HEK293 (cell line): ENCODE measurements at regions of chr12 and their contacts with region 1.

Region 1: DNA sequence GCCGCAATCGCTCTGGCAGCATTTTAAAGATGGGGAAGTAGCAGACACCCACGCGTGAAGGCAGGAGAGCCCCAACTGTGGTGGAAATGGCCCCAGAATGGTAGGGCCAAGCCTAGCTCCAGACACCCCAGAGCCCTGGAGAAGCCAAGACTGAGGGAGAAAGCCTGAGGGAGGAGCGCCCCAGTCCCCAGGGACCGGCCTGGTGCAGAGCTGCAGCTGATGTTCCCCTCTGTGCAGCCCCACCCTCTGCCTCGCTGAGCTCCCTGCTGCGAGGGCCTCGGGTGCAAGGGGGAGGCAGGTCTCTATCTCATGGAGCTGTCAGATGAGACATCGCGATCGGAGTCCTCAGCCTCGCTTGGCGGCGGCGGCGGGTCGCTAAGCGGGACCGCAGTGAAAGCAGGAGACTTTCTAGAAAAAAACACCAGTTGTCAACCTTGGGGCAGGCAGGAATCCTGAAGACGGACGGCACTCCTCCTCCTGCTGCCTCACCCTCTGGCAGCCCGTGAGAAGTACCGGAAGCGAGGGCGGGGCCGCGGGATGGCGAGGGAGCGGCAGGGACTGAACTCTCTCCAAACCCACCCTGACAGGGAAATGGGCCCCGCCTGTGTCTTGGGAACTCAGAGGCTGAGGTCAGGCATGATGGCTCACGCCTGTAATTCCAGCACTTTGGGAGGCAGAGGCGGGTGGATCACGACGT is 6.0 kb downstream of the GAPDH start:
- H3K4me3 ChIP-seq: no peak overlapping the region
- H3K27ac ChIP-seq: peak overlapping the region; percentile 38; the same call in 1 of the 2 replicates
- H3K4me1 ChIP-seq: peaks cover 4% of the 10 kb centered on the region; the same call in 1 of the 2 replicates
- CTCF ChIP-seq: no peak

Region 2: DNA sequence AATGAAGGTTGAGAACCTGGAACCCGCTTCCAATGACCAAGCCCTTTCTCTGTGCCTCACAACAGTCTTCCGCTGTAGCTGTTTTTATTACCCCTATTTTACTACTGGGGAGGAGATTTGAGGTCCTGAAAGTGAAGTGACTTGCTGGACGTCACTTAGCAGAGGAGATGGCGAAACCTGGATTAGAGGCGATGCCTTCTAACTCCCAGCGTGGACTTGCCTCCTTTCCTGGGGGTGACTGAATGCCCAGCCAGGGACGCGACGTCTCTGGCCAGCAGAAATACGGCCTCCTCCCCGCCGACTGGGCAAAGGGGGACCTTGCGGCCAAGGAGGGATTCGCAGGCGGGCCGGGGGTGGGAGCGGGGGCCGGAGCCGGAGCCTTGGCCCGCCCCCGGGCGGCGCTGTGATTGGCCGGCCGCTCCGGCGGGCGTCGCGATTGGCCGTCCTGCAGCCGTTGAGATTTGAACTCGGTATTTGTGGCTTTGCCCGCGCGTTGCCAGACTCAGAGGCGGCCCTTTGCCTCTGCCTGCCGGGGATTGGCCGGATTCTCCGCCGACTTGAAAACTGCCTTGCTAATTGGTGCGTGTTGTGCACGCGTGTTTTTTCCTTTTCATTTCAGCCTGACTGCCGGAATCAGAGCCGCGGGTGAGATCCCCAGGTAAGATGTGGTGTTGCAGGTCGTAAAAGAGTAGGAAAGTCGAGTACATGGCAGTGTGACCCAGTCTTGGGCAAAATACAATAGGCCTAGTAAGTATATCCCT is 46.7 kb before region 1 on chr12 and contains the start of gene NCAPD2:
- CTCF ChIA-PET with region 1: interaction called, 10 read pairs
- POLR2A ChIA-PET with region 1: interaction called, 51 read pairs
- H3K4me3 ChIP-seq: peak within 1 kb of the TSS; percentile 93
- H3K27ac ChIP-seq: peak within 1 kb of the TSS; percentile 94
- H3K4me1 ChIP-seq: peaks cover 7% of the 10 kb centered on the region; the same call in 1 of the 2 replicates
- CTCF ChIP-seq: peak; percentile 55; the same call in 1 of the 2 replicates

Region 3: GRCh38 chr12:6554168-6555017 is 14.1 kb after region 1 on chr12:
- CTCF ChIA-PET with region 1: interaction called, 51 read pairs
- POLR2A ChIA-PET with region 1: interaction called, 90 read pairs
- H3K4me3 ChIP-seq: peak overlapping the region; percentile 88
- H3K27ac ChIP-seq: peak overlapping the region; percentile 80
- H3K4me1 ChIP-seq: peaks cover 18% of the 10 kb centered on the region
- CTCF ChIP-seq: peak; percentile 82

Region 4: DNA sequence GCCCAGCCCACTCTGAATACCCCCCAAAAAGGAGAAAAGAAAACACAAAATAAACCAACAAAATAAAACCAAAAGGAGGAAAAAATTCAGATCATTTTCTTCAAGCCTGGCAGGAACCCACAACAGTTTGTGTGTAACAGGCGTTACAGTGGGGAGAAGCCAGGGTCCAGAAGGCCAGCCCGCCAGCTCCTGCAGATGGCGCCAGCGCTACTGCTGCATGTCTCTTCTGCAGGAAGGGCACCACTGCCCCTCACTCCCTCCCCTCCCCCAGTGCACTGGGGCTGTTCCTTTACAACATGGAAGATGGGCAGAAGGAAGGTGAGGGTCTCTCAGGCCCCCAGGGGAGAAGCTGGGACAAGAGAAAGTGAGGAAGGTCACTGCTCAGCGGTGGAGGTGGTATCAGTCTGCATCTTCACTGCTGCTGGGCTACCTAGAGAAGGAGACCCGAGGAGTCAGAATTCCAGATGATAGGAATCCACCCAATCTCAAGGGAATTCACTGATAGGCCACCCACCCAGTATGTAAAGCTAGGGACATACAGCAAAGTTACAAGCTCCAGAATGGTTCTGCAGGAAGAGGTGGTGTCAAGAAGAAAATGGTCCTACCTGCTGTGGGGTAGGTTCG is 30.0 kb after region 1 on chr12:
- CTCF ChIA-PET with region 1: interaction called, 4 read pairs
- POLR2A ChIA-PET with region 1: interaction called, 25 read pairs
- H3K4me3 ChIP-seq: no peak overlapping the region
- H3K27ac ChIP-seq: 0 out of 2 replicates have a peak overlapping the region, but pooled peaks have one; percentile 22
- H3K4me1 ChIP-seq: peaks cover 2% of the 10 kb centered on the region; the same call in 1 of the 2 replicates
- CTCF ChIP-seq: peak; percentile 70